B cell (primary cell): ENCODE measurements at regions of chr1 and their contacts with region 1.

Region 1: DNA sequence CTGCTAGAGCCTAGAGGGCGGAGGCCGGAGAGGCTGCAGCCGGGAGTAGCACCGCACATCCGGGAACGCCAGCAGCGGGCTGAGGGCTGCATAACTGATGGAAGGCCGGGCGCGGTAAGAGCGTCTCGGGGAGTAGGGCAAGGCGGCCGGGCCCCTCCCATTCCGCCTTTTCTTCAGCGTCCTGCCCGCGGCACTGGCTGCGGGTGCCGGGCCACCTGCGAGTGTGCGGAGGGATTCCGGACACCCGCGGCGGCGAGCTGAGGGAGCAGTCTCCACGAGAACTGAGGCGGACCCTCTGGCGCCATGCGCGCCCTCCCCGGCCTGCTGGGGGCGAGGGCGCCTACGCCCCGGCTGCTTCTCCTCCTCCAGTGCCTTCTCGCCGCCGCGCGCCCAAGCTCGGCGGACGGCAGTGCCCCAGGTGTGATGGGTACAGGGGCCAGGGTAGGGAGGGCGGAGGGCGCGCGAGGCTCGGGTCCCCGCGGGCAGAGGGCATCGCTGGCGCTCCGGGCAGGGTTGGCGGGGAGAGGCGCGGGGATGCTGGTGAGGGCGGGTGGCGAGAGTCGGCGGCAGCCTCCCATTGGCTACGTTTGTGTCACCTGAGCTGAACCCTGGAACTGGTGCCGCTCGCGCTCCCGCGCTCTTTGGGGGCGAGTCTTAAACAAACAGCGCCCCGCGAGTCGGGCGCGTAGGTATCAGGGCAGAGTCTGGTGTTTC is 334.4 kb downstream of the SRGAP2C start:
- DNase-seq: peak; percentile 86
- ATAC-seq: peak; percentile 87
- H3K4me3 ChIP-seq: peak overlapping the region; percentile 21 to 90 (median 73)
- H3K4me3 Mint-ChIP-seq: peak overlapping the region; percentile 90
- H3K27ac ChIP-seq: peak overlapping the region; percentile 47 to 81
- H3K27ac Mint-ChIP-seq: peak overlapping the region; percentile 95
- H3K4me1 ChIP-seq: peaks cover 32% of the 10 kb centered on the region in 2 donors
- H3K4me1 Mint-ChIP-seq: peaks cover 39% of the 10 kb centered on the region
- H3K27me3 ChIP-seq: no peaks in the 10 kb centered on the region
- H3K27me3 Mint-ChIP-seq: no peaks in the 10 kb centered on the region
- CTCF ChIP-seq: no peak

Region 2: GRCh38 chr1:121443001-121443540 is 76.1 kb before region 1 on chr1:
- CTCF ChIA-PET with region 1: interaction called, 10 read pairs
- POLR2A ChIA-PET with region 1: interaction called, 9 read pairs
- intact Hi-C with region 1: loop called (anchors 1 kb)
- DNase-seq: no peak
- ATAC-seq: no peak
- H3K4me3 ChIP-seq: no peak overlapping the region
- H3K4me3 Mint-ChIP-seq: no peak overlapping the region
- H3K27ac ChIP-seq: no peak overlapping the region
- H3K27ac Mint-ChIP-seq: no peak overlapping the region
- H3K4me1 ChIP-seq: no peaks in the 10 kb centered on the region
- H3K4me1 Mint-ChIP-seq: no peaks in the 10 kb centered on the region
- H3K27me3 ChIP-seq: no peaks in the 10 kb centered on the region
- H3K27me3 Mint-ChIP-seq: no peaks in the 10 kb centered on the region
- CTCF ChIP-seq: no peak

Region 3: GRCh38 chr1:121458291-121459048 is 60.7 kb before region 1 on chr1:
- CTCF ChIA-PET with region 1: interaction called, 10 read pairs
- POLR2A ChIA-PET with region 1: no interaction called
- intact Hi-C with region 1: loop called (anchors 2 kb)
- DNase-seq: peak; percentile 84
- ATAC-seq: peak; percentile 98
- H3K4me3 ChIP-seq: peak overlapping the region in 2 of 5 experiments; percentile 7 to 30
- H3K4me3 Mint-ChIP-seq: peak overlapping the region; percentile 76
- H3K27ac ChIP-seq: peak overlapping the region; percentile 65 to 81
- H3K27ac Mint-ChIP-seq: peak overlapping the region; percentile 90
- H3K4me1 ChIP-seq: peaks cover 4 to 10% of the 10 kb centered on the region in 2 donors
- H3K4me1 Mint-ChIP-seq: peaks cover 14% of the 10 kb centered on the region
- H3K27me3 ChIP-seq: no peaks in the 10 kb centered on the region
- H3K27me3 Mint-ChIP-seq: no peaks in the 10 kb centered on the region
- CTCF ChIP-seq: no peak

Region 4: GRCh38 chr1:121538943-121539575 is 19.9 kb after region 1 on chr1:
- CTCF ChIA-PET with region 1: no interaction called
- POLR2A ChIA-PET with region 1: no interaction called
- intact Hi-C with region 1: no loop called
- DNase-seq: no peak
- ATAC-seq: no peak
- H3K4me3 ChIP-seq: no peak overlapping the region
- H3K4me3 Mint-ChIP-seq: no peak overlapping the region
- H3K27ac ChIP-seq: no peak overlapping the region
- H3K27ac Mint-ChIP-seq: no peak overlapping the region
- H3K4me1 ChIP-seq: no peaks in the 10 kb centered on the region
- H3K4me1 Mint-ChIP-seq: no peaks in the 10 kb centered on the region
- H3K27me3 ChIP-seq: no peaks in the 10 kb centered on the region
- H3K27me3 Mint-ChIP-seq: no peaks in the 10 kb centered on the region
- CTCF ChIP-seq: no peak

Region 5: GRCh38 chr1:121558514-121558913 is 39.3 kb after region 1 on chr1:
- CTCF ChIA-PET with region 1: no interaction called
- POLR2A ChIA-PET with region 1: no interaction called
- intact Hi-C with region 1: loop called (anchors 5 kb)
- DNase-seq: no peak
- ATAC-seq: no peak
- H3K4me3 ChIP-seq: no peak overlapping the region
- H3K4me3 Mint-ChIP-seq: no peak overlapping the region
- H3K27ac ChIP-seq: no peak overlapping the region
- H3K27ac Mint-ChIP-seq: no peak overlapping the region
- H3K4me1 ChIP-seq: no peaks in the 10 kb centered on the region
- H3K4me1 Mint-ChIP-seq: peaks cover 3% of the 10 kb centered on the region
- H3K27me3 ChIP-seq: no peaks in the 10 kb centered on the region
- H3K27me3 Mint-ChIP-seq: no peaks in the 10 kb centered on the region
- CTCF ChIP-seq: no peak